ENCODE measurements at regions of chr1 and their contacts with region 1.

Region 1: GRCh38 chr1:101410048-101410878 is 173.4 kb downstream of the S1PR1 start:
- DNase-seq: no peak
- ATAC-seq: peak; percentile 33
- H3K4me3 Mint-ChIP-seq: peak overlapping the region; percentile 64
- H3K27ac Mint-ChIP-seq: peak overlapping the region; percentile 74
- H3K4me1 Mint-ChIP-seq: peaks cover 75% of the 10 kb centered on the region
- H3K27me3 Mint-ChIP-seq: no peaks in the 10 kb centered on the region
- CTCF ChIP-seq: no peak

Region 2: GRCh38 chr1:100895540-100896483 is 514.5 kb before region 1 on chr1 and contains the start of gene SLC30A7:
- CTCF ChIA-PET with region 1: no interaction called
- POLR2A ChIA-PET with region 1: interaction called, 6 read pairs
- intact Hi-C with region 1: loop called (anchors 1 kb)
- DNase-seq: peak; percentile 97
- ATAC-seq: peak; percentile 86
- H3K4me3 Mint-ChIP-seq: peak within 1 kb of the TSS; percentile 98
- H3K27ac Mint-ChIP-seq: peak within 1 kb of the TSS; percentile 95
- H3K4me1 Mint-ChIP-seq: peaks cover 29% of the 10 kb centered on the region
- H3K27me3 Mint-ChIP-seq: no peaks in the 10 kb centered on the region
- CTCF ChIP-seq: no peak
- total RNA-seq, gene SLC30A7: 21.1 and 25.7 TPM in 2 replicates

Region 3: GRCh38 chr1:100921109-100921706 is 489.1 kb before region 1 on chr1:
- CTCF ChIA-PET with region 1: no interaction called
- POLR2A ChIA-PET with region 1: no interaction called
- intact Hi-C with region 1: no loop called
- DNase-seq: no peak
- ATAC-seq: no peak
- H3K4me3 Mint-ChIP-seq: no peak overlapping the region
- H3K27ac Mint-ChIP-seq: no peak overlapping the region
- H3K4me1 Mint-ChIP-seq: peaks cover 24% of the 10 kb centered on the region
- H3K27me3 Mint-ChIP-seq: no peaks in the 10 kb centered on the region
- CTCF ChIP-seq: peak; percentile 98

Region 4: DNA sequence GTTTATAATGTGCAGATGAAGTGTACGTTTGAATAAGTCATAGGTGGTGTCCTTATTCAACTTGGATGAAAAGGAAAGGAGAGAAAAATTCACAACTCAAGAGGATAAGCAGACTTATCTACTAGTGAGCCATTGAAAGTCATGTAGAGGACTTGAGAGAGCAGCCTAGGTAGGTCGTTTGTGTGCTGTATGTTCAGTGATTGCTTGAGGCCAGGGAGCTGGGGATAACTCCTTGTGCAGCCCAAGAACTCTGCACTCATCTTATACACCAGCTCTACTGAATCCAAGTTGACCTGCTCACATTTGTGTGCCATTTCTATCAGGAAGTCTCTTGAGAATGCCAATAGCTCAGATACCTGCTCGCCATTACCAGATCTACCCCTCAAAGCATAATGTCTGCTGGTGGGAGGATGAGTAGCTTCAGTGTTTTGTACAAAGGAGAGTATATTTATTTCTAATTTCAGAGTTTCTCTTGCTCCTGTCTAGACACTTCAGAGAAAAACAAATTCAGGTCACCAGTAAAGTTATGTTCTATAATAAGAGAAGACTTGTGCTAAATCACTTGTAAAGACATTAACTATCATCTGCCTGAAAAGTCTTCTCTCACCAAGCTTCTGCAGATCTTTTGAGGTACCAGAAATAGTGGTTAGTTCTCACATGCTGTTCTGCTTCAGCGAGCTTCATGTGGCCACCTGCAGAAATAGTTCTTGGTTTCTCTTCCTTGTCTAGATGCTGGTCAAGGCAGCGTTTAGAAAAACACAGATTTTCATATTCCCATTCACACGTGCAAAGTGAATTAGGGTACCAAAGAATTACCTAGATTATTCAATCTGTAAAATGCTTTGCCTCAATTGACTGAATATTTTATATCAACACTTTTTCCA is 162.6 kb before region 1 on chr1:
- CTCF ChIA-PET with region 1: no interaction called
- POLR2A ChIA-PET with region 1: interaction called, 3 read pairs
- intact Hi-C with region 1: loop called (anchors 5 kb)
- DNase-seq: no peak
- ATAC-seq: peak; percentile 89
- H3K4me3 Mint-ChIP-seq: peak overlapping the region; percentile 44
- H3K27ac Mint-ChIP-seq: peak overlapping the region; percentile 82
- H3K4me1 Mint-ChIP-seq: peaks cover 82% of the 10 kb centered on the region
- H3K27me3 Mint-ChIP-seq: no peaks in the 10 kb centered on the region
- CTCF ChIP-seq: no peak

Region 5: DNA sequence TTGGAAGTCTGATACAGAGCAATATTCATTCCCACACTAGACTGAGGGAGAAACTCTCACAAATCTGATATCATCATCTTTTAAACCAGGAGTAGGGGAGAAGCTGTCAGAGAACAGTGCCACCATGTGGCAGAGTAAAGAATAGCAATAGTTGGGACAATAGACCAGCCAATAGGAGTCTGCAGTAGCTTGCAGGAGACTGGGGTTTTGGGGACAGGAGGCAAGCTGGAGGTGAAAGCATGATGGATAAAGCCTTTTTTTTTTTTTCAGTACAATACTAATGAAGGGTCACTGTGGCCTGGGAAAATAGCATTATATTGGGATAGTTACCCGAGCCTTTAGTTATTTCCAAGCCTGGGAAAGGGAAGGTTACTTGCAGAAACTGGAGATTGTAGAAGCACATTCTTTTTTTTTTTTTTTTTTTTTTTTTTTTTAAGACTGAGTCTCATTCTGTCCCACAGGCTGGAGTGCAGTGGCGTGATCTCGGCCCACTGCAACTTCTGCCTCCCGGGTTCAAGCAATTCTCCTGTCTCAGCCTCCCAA is 52.7 kb before region 1 on chr1:
- CTCF ChIA-PET with region 1: interaction called, 8 read pairs
- POLR2A ChIA-PET with region 1: no interaction called
- intact Hi-C with region 1: loop called (anchors 1 kb)
- DNase-seq: no peak
- ATAC-seq: peak; percentile 99
- H3K4me3 Mint-ChIP-seq: no peak overlapping the region
- H3K27ac Mint-ChIP-seq: no peak overlapping the region
- H3K4me1 Mint-ChIP-seq: peaks cover 9% of the 10 kb centered on the region
- H3K27me3 Mint-ChIP-seq: no peaks in the 10 kb centered on the region
- CTCF ChIP-seq: no peak

Region 6: DNA sequence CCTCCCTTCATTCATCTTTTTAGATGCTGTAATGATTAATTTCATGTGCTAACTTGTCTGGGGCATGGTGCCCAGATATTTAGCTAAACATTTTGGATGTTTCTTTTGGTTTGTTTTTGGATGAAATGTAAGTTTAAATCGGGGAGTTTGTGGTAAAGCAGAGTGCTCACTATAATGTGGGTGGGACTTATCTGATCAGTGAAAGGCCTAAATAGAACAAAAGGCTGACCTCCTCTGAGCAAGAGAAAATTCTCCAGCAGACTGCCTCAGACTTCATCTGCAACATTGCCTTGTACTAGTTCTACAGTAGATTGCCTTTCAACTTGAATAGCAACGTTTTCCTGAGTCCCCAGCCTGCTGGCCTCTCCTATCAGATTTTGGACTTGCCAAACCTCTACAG is 10.1 kb after region 1 on chr1:
- CTCF ChIA-PET with region 1: no interaction called
- POLR2A ChIA-PET with region 1: no interaction called
- intact Hi-C with region 1: loop called (anchors 2 kb)
- DNase-seq: no peak
- ATAC-seq: no peak
- H3K4me3 Mint-ChIP-seq: no peak overlapping the region
- H3K27ac Mint-ChIP-seq: no peak overlapping the region
- H3K4me1 Mint-ChIP-seq: peaks cover 7% of the 10 kb centered on the region
- H3K27me3 Mint-ChIP-seq: no peaks in the 10 kb centered on the region
- CTCF ChIP-seq: no peak

Region 7: DNA sequence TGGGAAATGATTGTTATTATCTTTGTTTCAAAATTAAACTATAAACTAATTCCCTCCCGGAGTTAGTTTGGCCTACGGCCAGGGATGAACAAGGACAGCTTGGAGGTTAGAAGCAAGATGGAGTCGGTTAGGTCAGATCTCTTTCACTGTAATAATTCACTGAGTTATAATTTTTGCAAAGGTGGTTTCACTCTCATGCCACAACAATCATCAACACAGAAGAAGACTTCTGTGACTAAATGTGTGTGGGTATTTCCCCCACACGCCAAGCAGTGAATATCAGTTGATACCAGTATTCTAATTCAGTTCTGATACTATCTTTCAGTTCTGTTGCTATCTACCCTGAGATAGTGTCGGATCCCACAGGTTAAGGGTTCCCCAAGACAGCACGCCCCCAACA is 41.6 kb after region 1 on chr1:
- CTCF ChIA-PET with region 1: no interaction called
- POLR2A ChIA-PET with region 1: no interaction called
- intact Hi-C with region 1: no loop called
- DNase-seq: no peak
- ATAC-seq: no peak
- H3K4me3 Mint-ChIP-seq: no peak overlapping the region
- H3K27ac Mint-ChIP-seq: no peak overlapping the region
- H3K4me1 Mint-ChIP-seq: peaks cover 29% of the 10 kb centered on the region
- H3K27me3 Mint-ChIP-seq: no peaks in the 10 kb centered on the region
- CTCF ChIP-seq: no peak